PC-9 (cell line): ENCODE measurements at regions of chr1 and their contacts with region 1.

Region 1: GRCh38 chr1:116268204-116268603 is 104.8 kb upstream of the ATP1A1 start:
- DNase-seq: peak; percentile 77 to 91
- H3K4me3 ChIP-seq: no peak overlapping the region
- H3K27ac ChIP-seq: peak overlapping the region; percentile 63
- H3K4me1 ChIP-seq: peaks cover 14% of the 10 kb centered on the region
- H3K27me3 ChIP-seq: no peaks in the 10 kb centered on the region
- CTCF ChIP-seq: no peak

Region 2: DNA sequence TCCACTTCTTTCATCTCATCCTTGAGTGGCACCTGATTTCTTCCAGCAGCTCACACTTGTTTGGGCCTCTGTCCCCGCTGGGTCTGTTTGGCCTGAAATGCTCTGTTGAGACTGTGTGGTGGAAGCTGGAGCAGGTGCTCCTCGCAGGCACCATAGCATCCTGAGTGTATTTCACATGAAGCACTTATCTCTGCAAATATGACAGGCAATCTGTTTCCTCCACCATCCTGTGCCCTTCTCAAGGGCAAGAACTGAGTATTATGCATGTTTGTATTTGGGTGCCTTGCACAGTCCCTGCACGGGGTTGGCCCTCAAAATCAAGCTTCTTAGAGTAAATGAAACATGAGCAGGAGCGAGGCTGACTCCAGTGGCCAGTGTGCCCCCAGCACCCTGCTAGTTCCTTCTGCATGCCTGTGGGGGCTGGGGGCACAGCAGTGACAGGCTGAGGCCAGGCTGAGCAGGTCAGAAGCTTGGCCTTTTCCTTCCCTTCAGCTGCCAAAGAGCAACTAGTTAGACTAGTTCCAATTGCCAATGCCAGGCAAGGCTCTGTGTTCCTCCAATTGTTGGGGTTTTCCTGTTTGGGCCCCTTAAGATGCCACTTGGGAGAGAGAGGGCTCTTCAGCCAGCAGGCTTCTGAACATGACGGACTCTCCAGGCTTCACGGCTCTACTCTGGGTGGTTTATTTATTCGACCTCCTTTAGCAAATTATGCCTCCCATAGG is 24.7 kb before region 1 on chr1:
- CTCF ChIA-PET with region 1: no interaction called
- POLR2A ChIA-PET with region 1: interaction called, 14 read pairs
- intact Hi-C with region 1: no loop called
- DNase-seq: no peak
- H3K4me3 ChIP-seq: no peak overlapping the region
- H3K27ac ChIP-seq: no peak overlapping the region
- H3K4me1 ChIP-seq: peaks cover 18% of the 10 kb centered on the region
- H3K27me3 ChIP-seq: no peaks in the 10 kb centered on the region
- CTCF ChIP-seq: no peak

Region 3: DNA sequence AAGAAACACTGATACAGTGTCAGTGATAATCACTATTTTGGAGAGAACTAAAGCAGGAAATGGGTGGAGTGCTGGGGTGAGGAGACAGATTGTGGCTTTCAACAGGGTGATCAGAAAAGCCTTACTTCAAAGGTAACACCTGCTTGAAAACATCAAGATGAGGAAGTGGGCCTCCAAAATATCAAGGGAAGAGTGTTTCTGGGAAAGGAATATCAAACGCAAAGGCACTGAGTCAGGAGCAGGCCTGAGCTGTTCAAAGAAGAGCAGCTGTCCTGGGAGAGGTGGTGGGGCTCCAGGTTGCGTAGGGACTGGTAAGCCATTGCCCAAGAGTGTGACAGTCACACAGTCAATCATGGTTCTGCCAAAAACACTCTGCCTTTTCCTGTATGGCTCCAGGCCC is 57.7 kb after region 1 on chr1:
- CTCF ChIA-PET with region 1: no interaction called
- POLR2A ChIA-PET with region 1: no interaction called
- intact Hi-C with region 1: no loop called
- DNase-seq: no peak
- H3K4me3 ChIP-seq: no peak overlapping the region
- H3K27ac ChIP-seq: no peak overlapping the region
- H3K4me1 ChIP-seq: peaks cover 39% of the 10 kb centered on the region
- H3K27me3 ChIP-seq: no peaks in the 10 kb centered on the region
- CTCF ChIP-seq: no peak

Region 4: DNA sequence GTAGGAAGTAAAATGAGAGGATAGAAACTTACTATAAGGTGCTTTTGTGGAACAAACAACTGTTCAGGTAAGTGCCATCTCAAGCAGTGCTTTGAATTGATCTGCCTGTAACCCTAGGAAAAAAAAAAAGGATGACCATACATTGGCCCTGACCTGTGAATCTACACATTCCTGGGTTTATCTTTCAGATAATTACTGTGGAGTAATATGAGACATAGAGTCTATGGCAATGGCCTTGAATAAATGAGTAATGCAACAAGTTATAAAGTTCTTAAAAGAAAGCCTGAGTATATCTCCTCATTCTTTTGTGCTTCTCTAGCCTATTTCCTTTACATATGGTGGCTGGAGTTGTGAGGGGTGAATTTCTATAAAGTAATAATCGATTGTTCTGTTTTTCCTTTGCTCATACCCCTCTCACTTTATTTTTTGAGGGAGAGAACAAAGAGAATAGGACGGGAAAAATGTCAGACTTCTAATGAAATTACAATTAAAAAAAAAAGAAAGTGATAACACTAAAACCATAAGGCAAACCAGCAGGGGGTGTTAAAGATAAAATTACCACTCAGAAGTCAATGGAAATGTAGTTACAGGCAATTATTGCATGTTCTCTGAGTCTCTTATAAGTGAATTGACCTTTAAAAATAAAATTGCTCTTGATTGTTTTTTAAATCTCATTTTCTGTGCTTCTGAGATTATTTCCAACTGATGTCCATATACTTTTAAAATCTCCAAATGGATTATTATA is 92.4 kb after region 1 on chr1:
- CTCF ChIA-PET with region 1: interaction called, 11 read pairs
- POLR2A ChIA-PET with region 1: no interaction called
- intact Hi-C with region 1: no loop called
- DNase-seq: peak in 1 of 2 experiments; percentile 65
- H3K4me3 ChIP-seq: no peak overlapping the region
- H3K27ac ChIP-seq: peak overlapping the region; percentile 24
- H3K4me1 ChIP-seq: peaks cover 56% of the 10 kb centered on the region
- H3K27me3 ChIP-seq: no peaks in the 10 kb centered on the region
- CTCF ChIP-seq: peak; percentile 65